Activated T-helper 2 cell treated with anti-CD3 and anti-CD28 coated beads, Interferon-gamma antibody, Interleukin-2, Interleukin-4, amounts not matched to agents 10 μg/mL and 5 μg/mL and 100 μg/mL, durations not matched to agents 14 hours and 24 hours and 36 hours (primary cell): ENCODE measurements at regions of chr10 and their contacts with region 1.

Region 1: GRCh38 chr10:91034494-91035159 is 113.7 kb upstream of the ANKRD1 start:
- DNase-seq: no peak
- H3K4me3 Mint-ChIP-seq: peak overlapping the region; percentile 18
- H3K27ac Mint-ChIP-seq: peak overlapping the region; percentile 82
- H3K4me1 Mint-ChIP-seq: peaks cover 14% of the 10 kb centered on the region
- H3K27me3 Mint-ChIP-seq: peaks cover 15% of the 10 kb centered on the region

Region 2: GRCh38 chr10:90437452-90437851 is 597.2 kb before region 1 on chr10:
- intact Hi-C with region 1: no loop called
- DNase-seq: no peak
- H3K4me3 Mint-ChIP-seq: no peak overlapping the region
- H3K27ac Mint-ChIP-seq: no peak overlapping the region
- H3K4me1 Mint-ChIP-seq: no peaks in the 10 kb centered on the region
- H3K27me3 Mint-ChIP-seq: no peaks in the 10 kb centered on the region

Region 3: GRCh38 chr10:90905925-90906324 is 128.7 kb before region 1 on chr10:
- intact Hi-C with region 1: loop called (anchors 5 kb)
- DNase-seq: no peak
- H3K4me3 Mint-ChIP-seq: peak overlapping the region; percentile 41
- H3K27ac Mint-ChIP-seq: peak overlapping the region; percentile 86
- H3K4me1 Mint-ChIP-seq: peaks cover 21% of the 10 kb centered on the region
- H3K27me3 Mint-ChIP-seq: no peaks in the 10 kb centered on the region

Region 4: DNA sequence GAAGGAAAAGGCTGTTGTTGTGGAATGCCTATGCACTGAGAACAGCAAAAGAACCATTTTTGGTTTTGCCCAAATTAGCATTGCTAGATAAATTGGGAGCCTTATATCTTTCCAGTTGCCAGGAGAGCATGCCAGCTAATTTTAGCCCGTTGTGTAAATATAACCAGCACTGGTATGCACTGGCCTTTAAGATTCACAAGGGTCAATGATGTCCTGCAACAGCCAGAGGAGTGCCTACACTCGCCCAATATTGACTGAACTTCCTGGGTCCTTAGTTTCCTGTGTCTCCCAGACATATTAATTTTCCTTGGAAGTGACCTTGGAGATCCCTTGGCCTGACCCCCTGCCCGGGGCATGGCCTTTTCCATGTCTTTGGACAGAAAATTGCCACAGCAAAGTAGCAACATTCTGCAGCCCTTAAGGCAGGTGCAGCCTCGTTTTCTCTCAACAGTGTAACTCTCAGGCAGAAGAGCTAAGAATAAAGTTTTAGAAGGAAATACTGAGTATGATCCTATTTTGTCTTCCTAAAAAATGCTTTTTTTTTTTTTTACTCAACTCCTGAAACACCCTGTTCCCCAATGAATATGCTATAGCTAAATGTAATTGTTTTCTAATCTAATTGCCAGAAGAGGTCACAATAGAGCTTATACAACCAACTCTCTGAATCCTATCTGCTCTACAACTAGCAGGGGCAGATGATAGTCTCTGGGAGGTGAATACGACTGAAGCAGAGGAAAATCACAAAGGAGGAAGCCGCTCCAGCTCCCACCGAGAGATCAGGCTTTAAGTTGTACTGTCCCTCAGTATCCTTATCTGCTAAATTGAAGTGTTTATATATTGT is 53.9 kb after region 1 on chr10:
- intact Hi-C with region 1: no loop called
- DNase-seq: no peak
- H3K4me3 Mint-ChIP-seq: no peak overlapping the region
- H3K27ac Mint-ChIP-seq: no peak overlapping the region
- H3K4me1 Mint-ChIP-seq: no peaks in the 10 kb centered on the region
- H3K27me3 Mint-ChIP-seq: peaks cover 9% of the 10 kb centered on the region